ENCODE measurements at regions of chr2 and their contacts with region 1.

Region 1: GRCh38 chr2:202831242-202832220 is 40.0 kb downstream of the ICA1L start:
- DNase-seq: peak; percentile 79
- ATAC-seq: peak; percentile 99
- H3K4me3 ChIP-seq: no peak overlapping the region
- H3K27ac ChIP-seq: no peak overlapping the region
- H3K4me1 ChIP-seq: peaks cover 15% of the 10 kb centered on the region
- H3K27me3 ChIP-seq: no peaks in the 10 kb centered on the region
- CTCF ChIP-seq: peak; percentile 95
- EP300 ChIP-seq: no peak
- POLR2A ChIP-seq: no peak
- RAD21 ChIP-seq: peak; percentile 84

Region 2: GRCh38 chr2:202577250-202578183 is 254.0 kb before region 1 on chr2:
- CTCF ChIA-PET with region 1: no interaction called
- POLR2A ChIA-PET with region 1: no interaction called
- in situ Hi-C with region 1: no loop called
- intact Hi-C with region 1: loop called (anchors 1 kb)
- DNase-seq: peak; percentile 62
- ATAC-seq: peak; percentile 70
- H3K4me3 ChIP-seq: peak overlapping the region in 2 of 3 experiments; percentile 9 to 51; a peak in 1 of 6 replicates
- H3K27ac ChIP-seq: peak overlapping the region; percentile 77
- H3K4me1 ChIP-seq: peaks cover 31% of the 10 kb centered on the region
- H3K27me3 ChIP-seq: no peaks in the 10 kb centered on the region
- CTCF ChIP-seq: no peak
- EP300 ChIP-seq: peak in 1 of 2 experiments; percentile 33; a peak in 1 of 4 replicates
- POLR2A ChIP-seq: no peak
- RAD21 ChIP-seq: 0 out of 2 replicates have a peak, but pooled peaks have one; percentile 16

Region 3: GRCh38 chr2:202790676-202791075 is 40.9 kb before region 1 on chr2:
- CTCF ChIA-PET with region 1: no interaction called
- POLR2A ChIA-PET with region 1: no interaction called
- in situ Hi-C with region 1: no loop called
- intact Hi-C with region 1: no loop called
- DNase-seq: no peak
- ATAC-seq: no peak
- H3K4me3 ChIP-seq: no peak overlapping the region
- H3K27ac ChIP-seq: no peak overlapping the region
- H3K4me1 ChIP-seq: peaks cover 10% of the 10 kb centered on the region
- H3K27me3 ChIP-seq: no peaks in the 10 kb centered on the region
- CTCF ChIP-seq: no peak
- EP300 ChIP-seq: no peak
- POLR2A ChIP-seq: no peak
- RAD21 ChIP-seq: no peak

Region 4: DNA sequence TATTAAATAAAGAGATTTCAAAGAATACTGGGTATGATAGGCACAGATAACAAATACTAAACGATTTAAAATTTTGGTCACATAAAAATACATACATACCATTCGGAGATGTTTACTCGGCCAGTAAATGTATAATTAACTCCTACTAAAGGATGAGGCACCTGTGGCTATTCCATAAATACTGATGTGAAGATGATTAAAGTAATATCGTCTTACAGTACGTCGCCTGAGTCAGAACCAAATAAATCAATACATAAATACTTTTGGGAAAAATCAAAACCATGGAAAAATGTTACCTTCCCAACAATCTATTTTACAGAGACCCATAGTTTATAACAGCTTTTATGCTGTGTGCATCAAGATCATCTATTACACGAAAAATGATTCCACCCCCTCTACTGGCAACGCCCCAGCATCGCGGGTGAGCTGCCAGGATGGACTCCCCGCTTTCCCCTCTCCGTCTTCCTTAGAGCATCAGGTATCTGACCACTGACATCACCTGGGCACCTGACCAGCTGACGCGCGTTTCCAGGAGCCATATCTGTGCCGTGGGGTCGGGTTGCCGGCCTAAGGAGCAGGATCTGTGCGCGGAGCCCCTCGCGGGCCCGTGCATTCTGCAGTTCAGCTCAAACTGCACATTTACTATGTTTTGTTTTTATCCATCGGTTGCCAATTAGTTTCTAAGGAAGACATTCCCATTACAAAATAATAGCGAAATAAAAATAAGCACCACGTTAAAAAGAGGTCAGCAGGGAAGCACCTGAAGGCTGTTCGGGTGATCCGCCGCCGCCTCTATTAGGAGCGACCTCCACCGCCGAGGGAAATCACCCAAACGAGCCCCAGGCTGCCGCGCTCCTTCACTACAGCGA is 39.1 kb after region 1 on chr2:
- CTCF ChIA-PET with region 1: interaction called, 12 read pairs
- POLR2A ChIA-PET with region 1: no interaction called
- in situ Hi-C with region 1: no loop called
- intact Hi-C with region 1: loop called (anchors 1 kb)
- DNase-seq: peak; percentile 81
- ATAC-seq: peak; percentile 88
- H3K4me3 ChIP-seq: peak overlapping the region; percentile 72 to 88 (median 85)
- H3K27ac ChIP-seq: peak overlapping the region; percentile 51
- H3K4me1 ChIP-seq: peaks cover 6% of the 10 kb centered on the region
- H3K27me3 ChIP-seq: no peaks in the 10 kb centered on the region
- CTCF ChIP-seq: peak; percentile 74
- EP300 ChIP-seq: no peak
- POLR2A ChIP-seq: peak in 1 of 2 experiments; percentile 78; a peak in 3 of 4 replicates
- RAD21 ChIP-seq: peak; percentile 63

Region 5: DNA sequence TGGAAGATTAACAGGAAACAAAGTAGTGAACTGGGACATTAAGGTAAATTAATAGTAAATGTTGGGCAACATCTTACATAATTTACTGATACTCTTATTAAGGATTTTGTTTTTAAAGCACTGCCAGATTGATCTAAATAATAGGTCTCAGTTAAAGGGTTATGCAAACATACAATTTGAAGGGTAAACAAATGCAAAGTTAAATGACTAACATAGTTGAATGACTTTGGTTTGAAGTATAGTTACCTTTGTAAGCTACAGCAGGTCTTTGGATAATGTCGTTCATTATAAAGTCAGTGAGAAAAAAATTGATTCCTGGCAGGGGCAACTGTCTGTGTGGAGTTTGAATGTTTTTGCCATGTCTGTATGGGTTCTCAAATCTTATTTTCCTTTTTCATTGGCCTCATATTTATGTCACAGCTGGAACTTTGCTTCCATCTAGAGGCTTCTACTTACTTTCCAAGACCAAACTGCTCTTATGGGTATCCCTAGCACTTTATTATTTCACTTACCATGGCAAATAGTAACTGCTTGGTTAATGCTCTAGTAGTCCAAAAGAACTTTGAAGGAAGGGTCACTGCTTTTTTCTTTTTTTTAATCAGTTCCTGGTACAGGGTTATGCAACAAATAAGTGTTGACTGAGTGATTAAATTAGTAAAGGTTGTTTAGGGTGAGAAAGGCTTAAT is 290.9 kb after region 1 on chr2:
- CTCF ChIA-PET with region 1: interaction called, 4 read pairs
- POLR2A ChIA-PET with region 1: no interaction called
- in situ Hi-C with region 1: no loop called
- intact Hi-C with region 1: loop called (anchors 1 kb)
- DNase-seq: peak; percentile 34
- ATAC-seq: peak; percentile 64
- H3K4me3 ChIP-seq: no peak overlapping the region
- H3K27ac ChIP-seq: no peak overlapping the region
- H3K4me1 ChIP-seq: peaks cover 9% of the 10 kb centered on the region
- H3K27me3 ChIP-seq: no peaks in the 10 kb centered on the region
- CTCF ChIP-seq: peak; percentile 63
- EP300 ChIP-seq: no peak
- POLR2A ChIP-seq: no peak
- RAD21 ChIP-seq: 0 out of 2 replicates have a peak, but pooled peaks have one; percentile 25

Region 6: DNA sequence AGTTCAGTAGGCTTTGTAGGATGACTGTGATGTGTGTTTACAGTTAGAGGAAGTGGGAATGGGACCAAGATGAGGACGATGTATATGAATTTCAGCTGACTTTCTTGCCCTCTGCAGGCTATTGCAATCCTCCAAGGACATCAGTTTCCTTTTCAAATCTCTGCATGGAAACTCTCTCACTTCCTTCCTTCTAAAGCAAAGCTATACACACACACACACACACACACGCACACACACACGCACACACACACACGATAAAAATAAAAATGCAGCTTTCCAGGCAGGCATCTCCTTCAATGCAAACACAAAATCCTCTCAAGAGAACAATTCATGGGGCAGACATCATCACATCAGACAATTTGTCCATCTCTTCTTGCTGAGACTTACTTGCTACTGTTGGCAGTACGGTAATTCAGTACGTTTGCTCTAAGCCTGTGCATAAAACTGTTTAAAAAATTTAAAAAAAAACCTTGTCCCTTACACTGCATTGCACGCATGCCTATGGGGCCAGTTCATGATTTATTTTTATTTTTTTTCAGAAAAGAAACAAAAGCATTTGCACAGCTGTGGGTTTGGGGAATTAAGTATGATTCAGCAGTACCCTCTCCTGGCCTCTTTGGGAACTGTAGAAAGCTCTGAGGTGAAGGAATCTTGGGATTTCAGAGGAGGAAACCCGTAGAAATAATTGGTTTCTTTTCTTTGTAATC is 1077.9 kb after region 1 on chr2:
- CTCF ChIA-PET with region 1: no interaction called
- POLR2A ChIA-PET with region 1: no interaction called
- in situ Hi-C with region 1: loop called (anchors 25 kb)
- intact Hi-C with region 1: loop called (anchors 10 kb)
- DNase-seq: peak; percentile 41
- ATAC-seq: peak; percentile 92
- H3K4me3 ChIP-seq: peak overlapping the region in 1 of 3 experiments; percentile 9; a peak in 2 of 6 replicates
- H3K27ac ChIP-seq: no peak overlapping the region
- H3K4me1 ChIP-seq: peaks cover 20% of the 10 kb centered on the region; the same call in 1 of the 2 replicates
- H3K27me3 ChIP-seq: no peaks in the 10 kb centered on the region
- CTCF ChIP-seq: peak; percentile 74
- EP300 ChIP-seq: no peak
- POLR2A ChIP-seq: no peak
- RAD21 ChIP-seq: peak; percentile 75; the same call in 1 of the 2 replicates